ENCODE measurements at regions of chr15 and their contacts with region 1.

Region 1: GRCh38 chr15:41660235-41661077 is at the start of gene MGA:
- DNase-seq: peak; percentile 95
- H3K4me3 ChIP-seq: peak within 1 kb of the TSS; percentile 60 to 71 (median 64)
- H3K27ac ChIP-seq: peak within 1 kb of the TSS; percentile 75 to 86 (median 81)
- H3K4me1 ChIP-seq: peaks cover 16 to 53% (median 41%) of the 10 kb centered on the region in 4 donors
- H3K27me3 ChIP-seq: no peaks in the 10 kb centered on the region
- CTCF ChIP-seq: no peak
- EP300 ChIP-seq: no peak
- POLR2A ChIP-seq: no peak
- total RNA-seq, gene MGA: 25.3 to 39.4 (median 31.5) TPM

Region 2: GRCh38 chr15:41557673-41558399 is 102.6 kb before region 1 on chr15:
- intact Hi-C with region 1: no loop called
- DNase-seq: no peak
- H3K4me3 ChIP-seq: peak overlapping the region; percentile 61 to 89 (median 78)
- H3K27ac ChIP-seq: peak overlapping the region; percentile 20 to 72 (median 54)
- H3K4me1 ChIP-seq: peaks cover 20 to 46% (median 42%) of the 10 kb centered on the region in 4 donors
- H3K27me3 ChIP-seq: no peaks in the 10 kb centered on the region
- CTCF ChIP-seq: peak; percentile 59 to 76 (median 62)
- EP300 ChIP-seq: no peak
- POLR2A ChIP-seq: no peak

Region 3: DNA sequence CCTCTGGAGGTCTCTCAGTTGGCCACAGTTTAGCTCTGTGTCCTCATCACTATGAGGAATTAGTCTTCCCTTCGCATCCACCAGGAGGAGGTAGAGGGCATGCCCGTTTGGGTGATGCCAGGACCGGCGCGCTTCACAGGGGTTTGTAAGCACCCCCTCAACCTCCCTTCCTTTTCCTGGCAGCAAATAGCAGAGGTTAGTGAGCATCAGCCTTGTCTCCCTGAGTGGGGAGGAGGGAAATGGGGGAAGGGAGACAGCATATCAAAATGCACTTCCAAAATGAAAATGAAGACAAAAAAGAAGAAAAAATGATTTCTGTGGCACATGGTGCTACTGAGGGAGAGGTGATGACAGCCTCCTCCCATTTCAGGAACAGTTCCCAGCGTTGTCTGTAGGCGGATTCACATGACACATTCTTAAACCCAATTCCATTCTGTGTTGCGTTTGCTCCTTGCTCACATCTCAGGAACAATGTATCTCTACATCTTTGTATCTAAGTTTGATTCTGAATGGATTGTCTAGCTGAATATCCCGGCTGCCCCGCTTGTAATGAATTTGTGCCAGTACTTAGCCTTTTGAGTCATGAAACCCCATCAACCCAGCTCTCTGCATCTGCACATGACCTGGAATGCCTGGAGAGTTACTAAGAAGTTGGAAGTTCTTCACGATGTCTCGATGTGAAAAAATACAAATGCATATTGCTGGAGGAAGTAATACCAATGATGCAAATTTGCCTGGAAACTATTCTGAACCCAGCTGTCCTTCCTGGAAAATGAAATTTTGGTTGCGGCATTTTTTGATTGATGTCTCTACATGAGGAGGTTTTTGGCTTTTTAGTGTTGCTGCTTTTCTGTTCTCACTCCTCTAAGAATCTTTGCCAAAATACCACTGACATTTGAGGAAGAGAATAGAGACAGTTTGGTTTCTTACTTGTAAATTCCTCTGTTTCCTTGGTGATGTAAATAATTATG is 56.2 kb before region 1 on chr15:
- intact Hi-C with region 1: loop called (anchors 5 kb)
- DNase-seq: no peak
- H3K4me3 ChIP-seq: peak overlapping the region; percentile 31 to 52 (median 38)
- H3K27ac ChIP-seq: peak overlapping the region in 3 of 4 donors; percentile 50 to 61 (median 56)
- H3K4me1 ChIP-seq: peaks cover 10 to 13% (median 11%) of the 10 kb centered on the region in 4 donors
- H3K27me3 ChIP-seq: no peaks in the 10 kb centered on the region
- CTCF ChIP-seq: peak; percentile 70 to 84 (median 73)
- EP300 ChIP-seq: no peak
- POLR2A ChIP-seq: no peak

Region 4: GRCh38 chr15:41621200-41622193 is 39.0 kb before region 1 on chr15:
- intact Hi-C with region 1: loop called (anchors 2 kb)
- DNase-seq: peak; percentile 95
- H3K4me3 ChIP-seq: peak overlapping the region; percentile 58 to 80 (median 71)
- H3K27ac ChIP-seq: peak overlapping the region; percentile 80 to 83 (median 82)
- H3K4me1 ChIP-seq: peaks cover 15 to 22% (median 20%) of the 10 kb centered on the region in 4 donors
- H3K27me3 ChIP-seq: no peaks in the 10 kb centered on the region
- CTCF ChIP-seq: no peak
- EP300 ChIP-seq: no peak
- POLR2A ChIP-seq: no peak

Region 5: GRCh38 chr15:41756198-41756597 is 95.7 kb after region 1 on chr15:
- intact Hi-C with region 1: no loop called
- DNase-seq: no peak
- H3K4me3 ChIP-seq: no peak overlapping the region
- H3K27ac ChIP-seq: no peak overlapping the region
- H3K4me1 ChIP-seq: no peaks in the 10 kb centered on the region
- H3K27me3 ChIP-seq: no peaks in the 10 kb centered on the region
- CTCF ChIP-seq: no peak
- EP300 ChIP-seq: no peak
- POLR2A ChIP-seq: no peak

Region 6: GRCh38 chr15:41894791-41895463 is 234.5 kb after region 1 on chr15:
- intact Hi-C with region 1: no loop called
- DNase-seq: no peak
- H3K4me3 ChIP-seq: peak overlapping the region; percentile 15 to 29 (median 20)
- H3K27ac ChIP-seq: peak overlapping the region; percentile 23 to 66 (median 42)
- H3K4me1 ChIP-seq: peaks cover 24 to 34% (median 27%) of the 10 kb centered on the region in 4 donors
- H3K27me3 ChIP-seq: no peaks in the 10 kb centered on the region
- CTCF ChIP-seq: no peak
- EP300 ChIP-seq: no peak
- POLR2A ChIP-seq: no peak

Region 7: DNA sequence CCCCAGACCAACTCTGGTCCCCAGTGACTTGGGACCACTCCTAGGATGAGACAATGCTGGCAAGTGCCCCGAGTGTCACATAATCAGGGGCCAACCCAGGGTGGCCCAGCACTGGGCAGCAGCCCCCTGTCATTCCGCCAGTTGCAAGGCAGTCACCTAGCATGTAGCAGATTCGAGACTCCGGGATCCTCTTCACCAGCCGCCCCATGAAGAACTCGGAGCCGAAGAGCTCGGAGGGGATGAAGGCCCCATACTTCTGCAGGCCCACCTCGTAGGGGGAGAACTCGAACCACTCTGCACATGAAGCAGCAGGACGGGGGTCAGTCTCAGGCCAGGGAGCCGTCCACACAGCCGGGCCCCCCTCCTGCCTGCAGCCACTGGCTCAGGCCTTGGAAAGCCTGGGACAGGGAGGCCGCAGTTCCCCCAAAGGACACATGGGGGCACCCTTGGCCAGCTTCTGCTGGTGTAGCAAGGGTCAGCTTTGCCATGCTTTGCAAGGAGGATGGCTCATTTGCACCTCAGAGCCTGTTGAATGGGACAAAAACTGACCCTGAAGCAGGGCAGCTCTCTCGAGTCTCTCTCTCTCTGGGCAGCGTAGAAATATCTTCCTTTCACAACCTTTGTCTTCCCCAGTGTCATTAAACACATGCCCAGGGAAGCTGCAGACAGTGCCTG is 328.9 kb after region 1 on chr15:
- intact Hi-C with region 1: no loop called
- DNase-seq: no peak
- H3K4me3 ChIP-seq: no peak overlapping the region
- H3K27ac ChIP-seq: no peak overlapping the region
- H3K4me1 ChIP-seq: no peaks in the 10 kb centered on the region
- H3K27me3 ChIP-seq: no peaks in the 10 kb centered on the region
- CTCF ChIP-seq: peak in 2 of 3 experiments; percentile 94 to 95
- EP300 ChIP-seq: no peak
- POLR2A ChIP-seq: no peak

Measured in esophagus muscularis mucosa (tissue), 4 donors.